ENCODE measurements at regions of chr1 and their contacts with region 1.

Region 1: DNA sequence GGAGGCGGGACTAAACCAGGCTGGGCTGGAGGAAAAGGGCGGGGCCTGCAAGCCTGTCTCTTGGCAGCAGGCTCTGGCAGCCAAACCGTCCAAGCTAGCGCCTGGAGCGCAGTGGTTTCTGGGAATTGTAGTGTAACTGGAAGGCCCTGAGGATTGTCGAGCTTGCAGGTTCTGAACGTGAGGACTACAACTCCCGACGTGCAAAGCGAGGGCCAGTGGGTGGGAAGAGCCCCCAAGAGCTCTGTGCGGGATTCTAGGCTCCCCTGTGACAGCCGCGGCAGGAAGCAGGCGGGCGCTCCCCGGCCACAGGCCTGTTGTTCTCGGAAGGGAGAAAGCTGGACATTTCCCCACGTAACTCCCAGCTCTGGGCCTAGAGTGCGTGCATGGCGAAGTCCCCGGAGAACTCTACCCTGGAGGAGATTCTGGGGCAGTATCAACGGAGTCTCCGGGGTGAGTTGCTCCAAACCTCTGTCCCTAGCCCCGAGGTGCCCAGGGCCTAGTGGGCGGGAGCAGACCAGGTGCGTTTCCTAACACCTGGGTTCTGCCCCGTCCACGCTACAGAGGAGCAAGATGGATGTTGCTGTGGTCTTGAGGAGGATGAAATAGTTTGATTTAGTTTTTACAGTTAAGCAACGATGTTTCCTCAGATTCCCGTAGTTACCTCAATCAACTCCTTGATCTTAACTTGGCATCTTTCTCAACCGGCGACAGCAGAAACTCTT is at the start of gene SDCCAG8:
- DNase-seq: peak; percentile 85 to 98 (median 93)
- ATAC-seq: peak; percentile 75
- H3K4me3 ChIP-seq: peak within 1 kb of the TSS; percentile 77 to 86
- H3K4me3 Mint-ChIP-seq: peak within 1 kb of the TSS; percentile 96
- H3K27ac ChIP-seq: peak within 1 kb of the TSS; percentile 93 to 94
- H3K27ac Mint-ChIP-seq: peak within 1 kb of the TSS; percentile 99
- H3K4me1 ChIP-seq: peaks cover 26% of the 10 kb centered on the region
- H3K4me1 Mint-ChIP-seq: peaks cover 55% of the 10 kb centered on the region
- H3K27me3 ChIP-seq: no peaks in the 10 kb centered on the region
- H3K27me3 Mint-ChIP-seq: no peaks in the 10 kb centered on the region
- CTCF ChIP-seq: no peak
- total RNA-seq, gene SDCCAG8: 17.7 to 25.4 TPM

Region 2: GRCh38 chr1:241519308-241520079 is 1736.5 kb before region 1 on chr1 and contains the start of gene FH:
- CTCF ChIA-PET with region 1: no interaction called
- POLR2A ChIA-PET with region 1: interaction called, 3 read pairs
- intact Hi-C with region 1: loop called (anchors 1 to 5 kb)
- DNase-seq: peak; percentile 83 to 98 (median 92)
- ATAC-seq: peak; percentile 98
- H3K4me3 ChIP-seq: peak within 1 kb of the TSS; percentile 56 to 75
- H3K4me3 Mint-ChIP-seq: peak within 1 kb of the TSS; percentile 94
- H3K27ac ChIP-seq: peak within 1 kb of the TSS; percentile 50 to 64
- H3K27ac Mint-ChIP-seq: peak within 1 kb of the TSS; percentile 90
- H3K4me1 ChIP-seq: peaks cover 11% of the 10 kb centered on the region
- H3K4me1 Mint-ChIP-seq: peaks cover 30% of the 10 kb centered on the region
- H3K27me3 ChIP-seq: peaks cover 5 to 6% of the 10 kb centered on the region in 2 experiments
- H3K27me3 Mint-ChIP-seq: peaks cover 22% of the 10 kb centered on the region
- CTCF ChIP-seq: no peak
- total RNA-seq, gene FH: 12.1 to 14.0 TPM

Region 3: DNA sequence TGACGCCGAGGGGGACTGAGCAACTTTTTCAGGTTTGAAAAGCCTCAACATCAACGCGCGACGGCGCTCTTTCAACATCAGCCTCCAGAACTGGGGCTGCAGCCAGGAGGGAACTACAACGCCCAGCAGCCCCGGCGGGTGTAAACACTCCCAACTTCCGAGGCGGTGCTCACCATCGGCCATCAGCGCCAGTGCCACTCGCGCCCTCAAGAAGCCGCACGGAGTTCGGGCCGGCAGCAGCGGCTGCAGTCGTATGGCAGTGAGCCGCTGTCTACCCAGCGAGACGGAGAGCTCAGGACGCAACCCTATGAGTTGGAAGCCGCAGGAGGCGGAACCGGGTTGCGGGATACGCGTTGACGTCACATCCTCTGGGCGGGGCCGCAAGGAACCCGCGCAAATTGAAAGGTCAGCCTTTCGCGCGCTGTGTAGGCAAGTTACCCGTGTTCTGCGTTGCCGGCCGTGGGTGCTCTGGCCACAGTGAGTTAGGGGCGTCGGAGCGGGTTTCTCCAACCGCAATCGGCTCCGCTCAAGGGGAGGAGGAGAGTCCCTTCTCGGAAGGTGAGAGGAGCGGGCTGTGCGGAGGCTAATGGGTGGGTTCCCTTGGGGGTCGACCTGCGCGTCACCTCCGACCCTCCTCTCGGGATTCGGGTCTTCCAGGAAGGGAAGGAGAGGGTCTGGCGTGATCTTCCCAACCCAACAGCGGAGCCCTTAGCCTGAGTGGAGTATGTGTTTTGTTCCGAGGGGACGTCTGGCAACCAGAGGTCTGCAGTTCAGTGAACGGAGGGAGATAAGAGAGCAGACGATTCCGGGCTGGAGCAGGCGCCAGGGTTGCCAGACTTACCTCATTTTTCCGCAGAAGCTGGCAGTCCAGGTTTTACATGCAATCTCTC is 1407.9 kb before region 1 on chr1 and contains the start of gene EXO1:
- CTCF ChIA-PET with region 1: no interaction called
- POLR2A ChIA-PET with region 1: no interaction called
- intact Hi-C with region 1: loop called (anchors 2 to 5 kb)
- DNase-seq: peak; percentile 78 to 95 (median 88)
- ATAC-seq: peak; percentile 97
- H3K4me3 ChIP-seq: peak within 1 kb of the TSS; percentile 94 to 100
- H3K4me3 Mint-ChIP-seq: peak within 1 kb of the TSS; percentile 100
- H3K27ac ChIP-seq: peak within 1 kb of the TSS; percentile 94 to 98
- H3K27ac Mint-ChIP-seq: peak within 1 kb of the TSS; percentile 99
- H3K4me1 ChIP-seq: peaks cover 9% of the 10 kb centered on the region
- H3K4me1 Mint-ChIP-seq: peaks cover 18% of the 10 kb centered on the region
- H3K27me3 ChIP-seq: no peaks in the 10 kb centered on the region
- H3K27me3 Mint-ChIP-seq: no peaks in the 10 kb centered on the region
- CTCF ChIP-seq: peak; percentile 29
- total RNA-seq, gene EXO1: 1.5 to 2.4 TPM

Region 4: DNA sequence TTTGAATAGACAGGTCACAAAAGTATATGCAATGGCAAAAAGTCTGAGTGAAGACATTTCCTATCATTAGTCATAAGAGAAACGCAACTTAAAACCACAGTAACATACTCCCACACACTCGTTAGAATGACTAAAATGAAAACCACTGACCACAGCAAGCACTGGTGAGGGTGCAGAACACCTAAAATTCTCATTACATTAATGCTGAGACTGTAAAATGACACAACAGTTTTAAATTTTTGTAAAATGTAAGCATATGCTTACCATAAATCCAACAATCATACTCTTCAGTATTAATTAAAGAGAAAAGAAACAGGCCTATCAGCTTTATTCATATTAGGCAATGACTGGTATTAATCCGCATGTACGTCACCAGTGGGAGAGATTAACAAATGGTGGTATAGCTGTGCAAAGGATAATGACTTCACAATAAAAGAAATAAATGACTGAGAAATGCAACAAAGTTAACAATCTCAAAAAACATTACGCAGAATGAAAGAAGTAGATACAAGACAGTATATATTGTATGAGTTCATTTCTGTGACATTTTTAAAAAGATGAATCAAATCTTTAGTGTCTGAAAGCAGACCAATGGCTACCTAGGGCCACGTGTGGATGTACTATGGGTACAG is 340.6 kb after region 1 on chr1:
- CTCF ChIA-PET with region 1: no interaction called
- POLR2A ChIA-PET with region 1: no interaction called
- intact Hi-C with region 1: no loop called
- DNase-seq: peak in 3 of 9 experiments; percentile 33 to 79 (median 69)
- ATAC-seq: peak; percentile 67
- H3K4me3 ChIP-seq: no peak overlapping the region
- H3K4me3 Mint-ChIP-seq: peak overlapping the region; percentile 30
- H3K27ac ChIP-seq: peak overlapping the region in 1 of 2 experiments; percentile 64
- H3K27ac Mint-ChIP-seq: peak overlapping the region; percentile 84
- H3K4me1 ChIP-seq: peaks cover 13% of the 10 kb centered on the region
- H3K4me1 Mint-ChIP-seq: peaks cover 39% of the 10 kb centered on the region
- H3K27me3 ChIP-seq: no peaks in the 10 kb centered on the region
- H3K27me3 Mint-ChIP-seq: no peaks in the 10 kb centered on the region
- CTCF ChIP-seq: no peak

Region 5: DNA sequence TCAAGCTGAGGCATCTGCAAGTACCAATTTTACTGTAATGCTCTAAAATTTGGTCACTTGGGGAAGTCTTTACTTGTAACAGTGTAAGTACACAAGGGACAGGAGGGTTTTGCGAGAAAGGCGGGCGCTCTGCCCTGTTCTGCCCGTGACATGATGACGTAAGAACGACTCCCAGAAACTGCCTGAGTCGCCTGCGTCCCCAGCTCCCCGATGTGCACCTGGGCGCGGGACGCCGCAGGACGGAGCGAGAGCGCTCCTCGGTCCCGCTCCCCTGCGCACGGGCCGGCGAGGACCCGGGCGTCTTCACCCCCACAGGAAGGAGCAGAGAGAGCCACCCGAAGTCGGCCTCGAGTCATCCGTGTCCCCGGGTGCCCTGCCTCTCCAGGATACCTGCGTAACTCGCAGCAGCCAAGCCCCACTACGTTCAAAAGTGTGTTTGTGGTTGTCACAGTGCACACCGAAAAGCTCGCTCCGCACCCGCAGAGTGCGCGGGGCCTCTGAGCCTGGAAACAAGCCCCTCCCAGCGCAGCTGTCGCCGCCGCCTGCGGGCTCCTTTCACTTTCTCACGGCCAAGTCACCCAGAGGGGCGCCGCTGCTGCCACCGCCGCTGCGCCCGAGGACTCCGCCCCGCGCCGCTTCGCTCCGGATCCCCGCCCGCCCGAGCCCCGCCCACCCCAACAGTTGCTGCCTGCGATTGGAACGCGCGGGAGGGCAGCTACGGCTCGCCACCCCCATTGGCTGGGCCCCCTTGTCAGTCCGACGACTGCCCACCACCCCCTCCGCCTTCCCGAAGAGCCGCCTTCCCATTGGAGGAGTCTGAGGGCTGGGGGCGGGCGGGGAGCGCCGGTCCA is 791.9 kb after region 1 on chr1:
- CTCF ChIA-PET with region 1: interaction called, 3 read pairs
- POLR2A ChIA-PET with region 1: interaction called, 13 read pairs
- intact Hi-C with region 1: loop called (anchors 1 to 2 kb)
- DNase-seq: peak; percentile 95 to 99 (median 97)
- ATAC-seq: peak; percentile 72
- H3K4me3 ChIP-seq: peak overlapping the region; percentile 83
- H3K4me3 Mint-ChIP-seq: peak overlapping the region; percentile 89
- H3K27ac ChIP-seq: peak overlapping the region; percentile 95 to 97
- H3K27ac Mint-ChIP-seq: peak overlapping the region; percentile 98
- H3K4me1 ChIP-seq: peaks cover 40% of the 10 kb centered on the region
- H3K4me1 Mint-ChIP-seq: peaks cover 26% of the 10 kb centered on the region
- H3K27me3 ChIP-seq: no peaks in the 10 kb centered on the region
- H3K27me3 Mint-ChIP-seq: no peaks in the 10 kb centered on the region
- CTCF ChIP-seq: no peak

Region 6: DNA sequence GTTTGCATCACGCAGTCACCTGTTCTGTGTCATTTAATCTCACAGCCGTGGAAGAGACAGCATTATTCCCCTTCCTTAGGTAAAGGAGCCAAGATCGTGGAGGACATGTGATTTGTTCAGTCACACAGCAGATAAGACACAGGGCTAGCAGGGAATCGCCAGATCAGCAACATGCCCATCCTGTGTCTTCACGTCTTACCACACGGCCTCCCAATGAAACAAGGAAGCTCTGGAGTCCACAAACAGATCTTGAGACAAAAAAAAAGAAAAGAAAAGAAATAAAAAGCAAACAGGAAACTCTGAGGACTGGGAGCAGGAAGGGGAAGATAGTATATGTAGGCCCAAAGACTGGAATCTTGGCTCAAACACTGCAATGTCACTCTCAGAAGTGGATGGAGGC is 1040.5 kb after region 1 on chr1:
- CTCF ChIA-PET with region 1: no interaction called
- POLR2A ChIA-PET with region 1: no interaction called
- intact Hi-C with region 1: loop called in 1 of 2 experiments (anchors 10 kb)
- DNase-seq: no peak
- ATAC-seq: no peak
- H3K4me3 ChIP-seq: no peak overlapping the region
- H3K4me3 Mint-ChIP-seq: no peak overlapping the region
- H3K27ac ChIP-seq: no peak overlapping the region
- H3K27ac Mint-ChIP-seq: no peak overlapping the region
- H3K4me1 ChIP-seq: peaks cover 4% of the 10 kb centered on the region
- H3K4me1 Mint-ChIP-seq: peaks cover 13% of the 10 kb centered on the region
- H3K27me3 ChIP-seq: no peaks in the 10 kb centered on the region
- H3K27me3 Mint-ChIP-seq: no peaks in the 10 kb centered on the region
- CTCF ChIP-seq: no peak

Region 7: GRCh38 chr1:244652699-244653466 is 1396.9 kb after region 1 on chr1 and contains the start of gene DESI2:
- CTCF ChIA-PET with region 1: no interaction called
- POLR2A ChIA-PET with region 1: no interaction called
- intact Hi-C with region 1: loop called in 1 of 2 experiments (anchors 5 kb)
- DNase-seq: peak; percentile 95 to 100 (median 97)
- ATAC-seq: peak; percentile 92
- H3K4me3 ChIP-seq: peak within 1 kb of the TSS; percentile 67 to 95
- H3K4me3 Mint-ChIP-seq: no peak within 1 kb of the TSS
- H3K27ac ChIP-seq: peak within 1 kb of the TSS; percentile 68 to 73
- H3K27ac Mint-ChIP-seq: peak within 1 kb of the TSS; percentile 86
- H3K4me1 ChIP-seq: peaks cover 22% of the 10 kb centered on the region
- H3K4me1 Mint-ChIP-seq: peaks cover 26% of the 10 kb centered on the region
- H3K27me3 ChIP-seq: no peaks in the 10 kb centered on the region
- H3K27me3 Mint-ChIP-seq: no peaks in the 10 kb centered on the region
- CTCF ChIP-seq: peak; percentile 39
- total RNA-seq, gene DESI2: 14.5 to 16.2 TPM

Region 8: GRCh38 chr1:244970661-244971551 is 1715.0 kb after region 1 on chr1:
- CTCF ChIA-PET with region 1: no interaction called
- POLR2A ChIA-PET with region 1: no interaction called
- intact Hi-C with region 1: loop called in 1 of 2 experiments (anchors 2 kb)
- DNase-seq: peak; percentile 86 to 97 (median 93)
- ATAC-seq: peak; percentile 80
- H3K4me3 ChIP-seq: peak overlapping the region; percentile 68 to 70
- H3K4me3 Mint-ChIP-seq: peak overlapping the region; percentile 97
- H3K27ac ChIP-seq: peak overlapping the region; percentile 99 to 100
- H3K27ac Mint-ChIP-seq: peak overlapping the region; percentile 98
- H3K4me1 ChIP-seq: peaks cover 5% of the 10 kb centered on the region
- H3K4me1 Mint-ChIP-seq: peaks cover 19% of the 10 kb centered on the region
- H3K27me3 ChIP-seq: no peaks in the 10 kb centered on the region
- H3K27me3 Mint-ChIP-seq: no peaks in the 10 kb centered on the region
- CTCF ChIP-seq: peak; percentile 54

Measured in CD8-positive, alpha-beta T cell (primary cell).